PC-9 (cell line): ENCODE measurements at regions of chr1 and their contacts with region 1.

Region 1: GRCh38 chr1:59499273-59499942 is 202.5 kb downstream of the FGGY start:
- DNase-seq: peak in 1 of 2 experiments; percentile 76
- H3K4me3 ChIP-seq: peak overlapping the region; percentile 41
- H3K27ac ChIP-seq: peak overlapping the region; percentile 79
- H3K4me1 ChIP-seq: peaks cover 38% of the 10 kb centered on the region
- H3K27me3 ChIP-seq: no peaks in the 10 kb centered on the region
- CTCF ChIP-seq: no peak

Region 2: GRCh38 chr1:59367301-59368007 is 132.0 kb before region 1 on chr1:
- CTCF ChIA-PET with region 1: no interaction called
- POLR2A ChIA-PET with region 1: interaction called, 19 read pairs
- intact Hi-C with region 1: no loop called
- DNase-seq: peak; percentile 25 to 63
- H3K4me3 ChIP-seq: no peak overlapping the region
- H3K27ac ChIP-seq: no peak overlapping the region
- H3K4me1 ChIP-seq: 0 out of 2 replicates have a peak, but pooled peaks cover 6% of the 10 kb centered on the region
- H3K27me3 ChIP-seq: no peaks in the 10 kb centered on the region
- CTCF ChIP-seq: no peak